Activated CD4-positive, alpha-beta T cell treated with anti-CD3 and anti-CD28 coated beads for 36 hours (primary cell): ENCODE measurements at regions of chr5 and their contacts with region 1.

Region 1: GRCh38 chr5:35741126-35741716 is 115.5 kb upstream of the IL7R start:
- DNase-seq: no peak
- ATAC-seq: peak; percentile 57
- H3K4me3 Mint-ChIP-seq: no peak overlapping the region
- H3K27ac Mint-ChIP-seq: peak overlapping the region; percentile 73
- H3K4me1 Mint-ChIP-seq: peaks cover 65% of the 10 kb centered on the region
- H3K27me3 Mint-ChIP-seq: no peaks in the 10 kb centered on the region

Region 2: GRCh38 chr5:35617435-35618303 is 123.6 kb before region 1 on chr5 and contains the start of gene SPEF2:
- CTCF ChIA-PET with region 1: no interaction called
- POLR2A ChIA-PET with region 1: no interaction called
- intact Hi-C with region 1: loop called in 1 of 2 experiments (anchors 1 kb)
- DNase-seq: peak; percentile 91
- ATAC-seq: peak; percentile 92
- H3K4me3 Mint-ChIP-seq: peak within 1 kb of the TSS; percentile 83
- H3K27ac Mint-ChIP-seq: peak within 1 kb of the TSS; percentile 99
- H3K4me1 Mint-ChIP-seq: peaks cover 31% of the 10 kb centered on the region
- H3K27me3 Mint-ChIP-seq: no peaks in the 10 kb centered on the region
- total RNA-seq, gene SPEF2: 14.1 to 14.6 TPM

Region 3: DNA sequence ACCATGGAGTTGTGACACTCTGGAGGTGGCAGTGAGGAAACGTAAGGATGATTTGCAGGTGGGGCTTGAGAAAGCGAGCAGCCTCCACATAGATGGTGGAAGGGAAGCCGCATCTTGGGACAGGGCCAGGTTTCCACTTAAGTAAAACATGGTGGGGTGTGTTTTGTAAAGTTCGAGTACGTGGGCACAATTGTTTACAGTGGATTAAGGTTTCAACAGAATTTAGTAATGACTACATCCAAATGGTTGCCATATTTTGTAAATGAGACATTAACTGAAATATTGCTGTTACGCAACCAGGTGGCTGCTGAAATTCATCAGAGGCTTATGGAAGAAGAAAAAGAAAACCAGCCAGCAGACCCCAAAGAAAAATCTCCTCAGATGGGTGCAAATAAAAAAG is 30.1 kb after region 1 on chr5:
- CTCF ChIA-PET with region 1: interaction called, 5 read pairs
- POLR2A ChIA-PET with region 1: no interaction called
- intact Hi-C with region 1: loop called (anchors 2 to 5 kb)
- DNase-seq: no peak
- ATAC-seq: no peak
- H3K4me3 Mint-ChIP-seq: no peak overlapping the region
- H3K27ac Mint-ChIP-seq: no peak overlapping the region
- H3K4me1 Mint-ChIP-seq: peaks cover 53% of the 10 kb centered on the region
- H3K27me3 Mint-ChIP-seq: no peaks in the 10 kb centered on the region

Region 4: GRCh38 chr5:35799753-35800152 is 58.5 kb after region 1 on chr5:
- CTCF ChIA-PET with region 1: no interaction called
- POLR2A ChIA-PET with region 1: no interaction called
- intact Hi-C with region 1: no loop called
- DNase-seq: no peak
- ATAC-seq: no peak
- H3K4me3 Mint-ChIP-seq: no peak overlapping the region
- H3K27ac Mint-ChIP-seq: no peak overlapping the region
- H3K4me1 Mint-ChIP-seq: peaks cover 77% of the 10 kb centered on the region
- H3K27me3 Mint-ChIP-seq: no peaks in the 10 kb centered on the region

Region 5: GRCh38 chr5:35815089-35815936 is 74.1 kb after region 1 on chr5:
- CTCF ChIA-PET with region 1: interaction called, 3 read pairs
- POLR2A ChIA-PET with region 1: no interaction called
- intact Hi-C with region 1: loop called in 1 of 2 experiments (anchors 2 kb)
- DNase-seq: peak; percentile 72
- ATAC-seq: peak; percentile 41
- H3K4me3 Mint-ChIP-seq: no peak overlapping the region
- H3K27ac Mint-ChIP-seq: no peak overlapping the region
- H3K4me1 Mint-ChIP-seq: peaks cover 56% of the 10 kb centered on the region
- H3K27me3 Mint-ChIP-seq: no peaks in the 10 kb centered on the region

Region 6: DNA sequence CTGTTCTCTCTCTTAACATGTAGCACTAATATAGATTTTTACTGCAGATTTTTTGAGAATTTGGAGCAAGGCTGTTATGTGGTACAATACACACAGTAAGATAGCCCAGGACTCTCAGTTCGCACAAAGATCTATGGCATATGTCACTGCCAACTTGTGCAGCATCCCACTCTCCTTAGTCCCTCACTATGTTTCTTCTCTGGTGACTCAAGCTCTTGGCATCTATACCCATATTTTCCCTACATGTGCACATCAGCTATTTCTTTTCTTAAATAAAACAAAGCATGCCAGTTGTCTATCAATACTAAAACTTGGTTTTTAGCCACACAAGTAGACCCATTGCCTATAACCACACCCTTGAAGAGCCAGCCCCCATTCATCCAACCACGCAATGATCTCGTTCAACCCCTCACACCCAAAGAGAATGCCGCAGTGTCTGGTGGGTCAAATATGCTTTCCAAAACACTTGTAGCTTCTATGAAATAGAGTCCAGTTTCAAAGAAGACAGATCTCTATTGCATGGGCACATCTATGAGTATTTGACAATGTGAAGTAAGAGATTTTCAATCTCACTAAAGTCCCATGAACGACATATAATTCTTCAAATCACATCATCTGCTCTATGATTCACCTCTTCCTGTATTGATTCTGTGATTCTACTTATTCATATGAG is 97.3 kb after region 1 on chr5:
- CTCF ChIA-PET with region 1: no interaction called
- POLR2A ChIA-PET with region 1: no interaction called
- intact Hi-C with region 1: loop called (anchors 5 kb)
- DNase-seq: peak; percentile 69
- ATAC-seq: peak; percentile 65
- H3K4me3 Mint-ChIP-seq: peak overlapping the region; percentile 61
- H3K27ac Mint-ChIP-seq: peak overlapping the region; percentile 99
- H3K4me1 Mint-ChIP-seq: peaks cover 78% of the 10 kb centered on the region
- H3K27me3 Mint-ChIP-seq: no peaks in the 10 kb centered on the region